ENCODE measurements at regions of chr1 and their contacts with region 1.

Region 1: DNA sequence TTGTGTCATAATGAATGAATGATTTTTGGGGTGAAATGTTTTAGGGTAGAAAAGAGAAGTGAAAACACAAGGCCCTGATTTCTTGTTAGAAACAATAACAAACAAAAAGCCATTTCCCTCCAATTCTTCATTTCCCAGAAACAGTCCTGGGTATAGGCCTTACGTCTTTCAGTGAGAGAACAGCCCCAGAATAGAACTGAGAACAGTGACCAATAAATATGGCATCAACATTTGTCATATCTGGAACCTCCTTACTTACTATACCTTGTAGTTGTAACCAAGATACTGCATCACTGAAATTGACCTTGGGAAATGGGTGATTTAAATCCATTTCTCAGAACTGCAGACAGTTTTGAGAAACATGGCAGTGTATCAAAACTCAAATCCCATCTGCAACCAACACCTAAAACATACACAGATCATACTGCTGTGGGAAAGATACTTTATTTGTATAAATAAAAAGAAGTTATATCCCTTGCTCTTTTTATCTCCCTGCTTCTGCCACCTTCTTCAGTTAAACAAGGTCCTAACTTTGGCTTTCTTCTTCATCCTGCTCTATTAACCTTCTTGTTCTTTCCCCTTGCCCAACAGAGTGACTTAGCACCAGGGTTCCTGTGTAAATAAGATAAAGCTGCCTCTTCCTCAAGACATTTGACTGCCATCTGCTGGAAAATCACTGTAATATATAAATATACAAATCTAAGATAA is 19.5 kb downstream of the XKR8 start:
- DNase-seq: no peak
- ATAC-seq: peak; percentile 64
- H3K4me3 Mint-ChIP-seq: no peak overlapping the region
- H3K27ac Mint-ChIP-seq: no peak overlapping the region
- H3K4me1 Mint-ChIP-seq: no peaks in the 10 kb centered on the region
- H3K27me3 Mint-ChIP-seq: no peaks in the 10 kb centered on the region

Region 2: DNA sequence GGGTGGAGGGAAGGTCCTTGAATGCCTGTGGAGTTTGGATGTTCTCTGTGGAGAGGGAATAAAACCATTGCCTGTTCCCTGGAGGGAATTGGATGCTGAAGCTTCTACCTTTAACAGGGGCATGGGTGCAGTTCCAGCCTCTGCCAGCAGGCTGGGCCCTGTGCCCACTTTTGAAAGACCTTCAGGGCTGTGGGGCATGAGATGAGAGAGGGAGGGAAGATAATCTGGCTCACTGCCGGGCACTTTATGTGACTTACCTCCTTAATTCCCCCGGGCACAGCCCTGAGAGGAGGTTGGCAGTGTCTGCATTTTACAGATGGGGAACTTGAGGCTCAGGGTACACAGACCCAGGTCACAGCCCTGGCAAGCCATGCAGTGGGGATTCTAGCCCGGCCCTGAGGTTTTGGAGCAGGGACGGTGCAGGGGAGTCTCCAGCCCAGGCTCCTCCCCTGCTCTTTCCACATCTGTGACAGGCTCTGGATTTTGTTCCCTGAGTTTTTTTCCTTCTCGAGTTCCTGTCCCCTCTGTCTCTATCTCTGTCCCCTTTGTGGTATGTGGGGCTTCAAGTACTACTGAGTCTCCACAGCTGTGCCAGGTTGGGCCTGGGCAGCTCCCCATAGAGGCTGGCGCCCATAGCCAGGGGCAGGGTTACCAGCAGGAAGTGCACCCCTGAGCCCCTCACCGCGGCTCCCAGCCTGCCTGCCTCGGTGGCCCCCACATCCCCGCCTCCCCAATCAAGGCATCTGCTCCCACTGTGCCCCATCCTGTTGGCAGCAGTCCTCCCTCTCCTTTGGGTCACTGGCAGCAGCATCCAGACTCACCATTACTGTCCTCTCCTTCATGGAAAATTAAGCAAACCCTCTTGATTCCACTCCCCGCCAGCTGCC is 121.0 kb before region 1 on chr1:
- CTCF ChIA-PET with region 1: interaction called, 41 read pairs
- POLR2A ChIA-PET with region 1: no interaction called
- DNase-seq: peak; percentile 90
- ATAC-seq: peak; percentile 96
- H3K4me3 Mint-ChIP-seq: no peak overlapping the region
- H3K27ac Mint-ChIP-seq: peak overlapping the region; percentile 80
- H3K4me1 Mint-ChIP-seq: peaks cover 22% of the 10 kb centered on the region
- H3K27me3 Mint-ChIP-seq: no peaks in the 10 kb centered on the region

Region 3: DNA sequence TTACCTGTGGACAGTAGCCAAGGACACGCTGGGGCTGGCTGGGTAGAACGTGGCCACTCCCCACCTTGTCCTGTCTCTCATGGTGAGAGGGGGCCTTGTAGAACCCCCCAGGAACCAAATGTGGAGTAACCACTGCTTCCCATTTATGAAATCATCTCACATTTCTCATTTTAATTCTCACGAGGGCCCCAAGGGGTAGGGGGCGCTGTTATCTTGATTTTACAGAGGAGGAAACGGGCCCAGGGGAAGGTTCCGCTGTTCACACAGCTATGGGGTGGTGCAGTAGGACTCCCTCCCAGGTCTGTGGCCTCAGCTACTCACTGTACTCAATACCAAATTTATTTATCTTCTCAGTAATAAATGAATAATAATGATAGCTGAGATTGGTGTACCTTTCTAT is 39.0 kb before region 1 on chr1:
- CTCF ChIA-PET with region 1: interaction called, 38 read pairs
- POLR2A ChIA-PET with region 1: no interaction called
- DNase-seq: peak; percentile 83
- ATAC-seq: peak; percentile 81
- H3K4me3 Mint-ChIP-seq: no peak overlapping the region
- H3K27ac Mint-ChIP-seq: peak overlapping the region; percentile 28
- H3K4me1 Mint-ChIP-seq: peaks cover 42% of the 10 kb centered on the region
- H3K27me3 Mint-ChIP-seq: peaks cover 8% of the 10 kb centered on the region

Region 4: GRCh38 chr1:27992276-27992675 is 13.0 kb after region 1 on chr1:
- CTCF ChIA-PET with region 1: interaction called, 11 read pairs
- POLR2A ChIA-PET with region 1: no interaction called
- DNase-seq: peak; percentile 70
- ATAC-seq: peak; percentile 96
- H3K4me3 Mint-ChIP-seq: no peak overlapping the region
- H3K27ac Mint-ChIP-seq: peak overlapping the region; percentile 73
- H3K4me1 Mint-ChIP-seq: peaks cover 48% of the 10 kb centered on the region
- H3K27me3 Mint-ChIP-seq: no peaks in the 10 kb centered on the region

Region 5: DNA sequence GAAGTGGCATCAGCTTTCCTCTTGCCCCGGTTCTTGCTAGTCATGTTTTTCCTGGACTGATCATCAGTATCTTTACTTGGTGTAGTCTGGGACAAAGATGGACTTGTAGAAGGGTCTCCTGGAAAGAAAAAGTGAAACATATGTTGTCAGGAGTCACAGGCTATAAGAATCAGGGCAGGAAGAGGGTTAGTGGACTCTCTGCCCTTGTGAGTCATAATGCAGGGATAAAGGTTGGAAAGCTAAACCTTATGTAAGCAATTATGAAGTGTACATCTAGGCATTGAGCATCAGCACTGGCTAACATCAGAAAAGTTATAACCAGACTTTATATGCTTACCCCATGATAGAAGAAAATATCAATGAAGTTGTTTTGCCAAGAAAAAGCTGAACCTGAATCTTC is 31.7 kb after region 1 on chr1:
- CTCF ChIA-PET with region 1: no interaction called
- POLR2A ChIA-PET with region 1: no interaction called
- DNase-seq: no peak
- ATAC-seq: no peak
- H3K4me3 Mint-ChIP-seq: no peak overlapping the region
- H3K27ac Mint-ChIP-seq: no peak overlapping the region
- H3K4me1 Mint-ChIP-seq: no peaks in the 10 kb centered on the region
- H3K27me3 Mint-ChIP-seq: no peaks in the 10 kb centered on the region

Region 6: GRCh38 chr1:28112388-28113241 is 133.3 kb after region 1 on chr1:
- CTCF ChIA-PET with region 1: no interaction called
- POLR2A ChIA-PET with region 1: no interaction called
- DNase-seq: no peak
- ATAC-seq: no peak
- H3K4me3 Mint-ChIP-seq: no peak overlapping the region
- H3K27ac Mint-ChIP-seq: no peak overlapping the region
- H3K4me1 Mint-ChIP-seq: peaks cover 35% of the 10 kb centered on the region
- H3K27me3 Mint-ChIP-seq: peaks cover 11% of the 10 kb centered on the region

Region 7: GRCh38 chr1:28259307-28260167 is 280.2 kb after region 1 on chr1 and contains the start of gene SESN2:
- CTCF ChIA-PET with region 1: no interaction called
- POLR2A ChIA-PET with region 1: no interaction called
- DNase-seq: peak; percentile 100
- ATAC-seq: peak; percentile 92
- H3K4me3 Mint-ChIP-seq: peak within 1 kb of the TSS; percentile 82
- H3K27ac Mint-ChIP-seq: peak within 1 kb of the TSS; percentile 86
- H3K4me1 Mint-ChIP-seq: peaks cover 50% of the 10 kb centered on the region
- H3K27me3 Mint-ChIP-seq: no peaks in the 10 kb centered on the region
- total RNA-seq, gene SESN2: 12.5 to 12.6 TPM